CD8-positive, alpha-beta T cell (primary cell): ENCODE measurements at regions of chr9 and their contacts with region 1.

Region 1: GRCh38 chr9:129413537-129414376 is 207.1 kb downstream of the C9orf50 start:
- DNase-seq: peak; percentile 97 to 100 (median 99)
- ATAC-seq: peak; percentile 76
- H3K4me3 ChIP-seq: peak overlapping the region; percentile 56 to 87
- H3K4me3 Mint-ChIP-seq: peak overlapping the region; percentile 87
- H3K27ac ChIP-seq: peak overlapping the region; percentile 99
- H3K27ac Mint-ChIP-seq: peak overlapping the region; percentile 99
- H3K4me1 ChIP-seq: peaks cover 27% of the 10 kb centered on the region
- H3K4me1 Mint-ChIP-seq: peaks cover 33% of the 10 kb centered on the region
- H3K27me3 ChIP-seq: no peaks in the 10 kb centered on the region
- H3K27me3 Mint-ChIP-seq: no peaks in the 10 kb centered on the region
- CTCF ChIP-seq: no peak

Region 2: DNA sequence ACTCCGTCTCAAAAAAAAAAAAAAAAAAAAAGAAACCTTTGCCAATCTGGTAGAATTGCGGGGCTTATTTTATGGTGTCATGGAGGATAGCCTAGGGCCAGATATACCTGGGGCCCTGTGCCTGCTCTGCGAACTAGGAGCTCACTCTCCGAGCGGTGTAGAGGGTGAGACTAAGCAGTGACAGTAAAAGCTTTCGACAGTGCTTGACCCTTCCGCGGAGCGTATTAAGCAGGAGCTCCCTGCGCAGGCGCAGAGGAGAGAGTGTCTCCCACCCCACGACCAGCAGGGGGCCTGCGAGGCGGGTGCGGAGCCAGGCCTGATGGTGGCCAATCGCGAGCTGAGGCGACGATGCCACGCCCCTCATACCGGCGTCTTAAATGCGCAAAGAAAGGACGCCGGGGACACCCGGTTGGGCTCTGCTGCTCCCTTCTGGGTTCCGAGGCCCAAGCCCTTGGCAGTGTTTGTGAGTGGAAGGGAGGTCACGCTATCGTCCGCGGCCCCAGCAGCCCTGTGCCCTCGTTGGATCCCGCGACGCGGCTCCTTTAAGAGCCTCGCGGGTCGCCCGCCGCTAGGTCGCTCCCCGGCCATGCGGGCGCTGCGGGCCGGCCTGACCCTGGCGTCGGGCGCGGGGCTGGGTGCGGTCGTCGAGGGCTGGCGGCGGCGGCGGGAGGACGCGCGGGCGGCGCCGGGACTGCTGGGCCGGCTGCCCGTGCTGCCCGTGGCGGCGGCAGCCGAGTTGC is 595.5 kb before region 1 on chr9 and contains the start of gene ENDOG:
- CTCF ChIA-PET with region 1: no interaction called
- POLR2A ChIA-PET with region 1: no interaction called
- intact Hi-C with region 1: no loop called
- DNase-seq: peak; percentile 94 to 98 (median 97)
- ATAC-seq: peak; percentile 96
- H3K4me3 ChIP-seq: peak within 1 kb of the TSS; percentile 59 to 75
- H3K4me3 Mint-ChIP-seq: peak within 1 kb of the TSS; percentile 91
- H3K27ac ChIP-seq: peak within 1 kb of the TSS; percentile 52 to 67
- H3K27ac Mint-ChIP-seq: peak within 1 kb of the TSS; percentile 87
- H3K4me1 ChIP-seq: peaks cover 12% of the 10 kb centered on the region
- H3K4me1 Mint-ChIP-seq: peaks cover 21% of the 10 kb centered on the region
- H3K27me3 ChIP-seq: no peaks in the 10 kb centered on the region
- H3K27me3 Mint-ChIP-seq: no peaks in the 10 kb centered on the region
- CTCF ChIP-seq: peak; percentile 98
- total RNA-seq, gene ENDOG: 6.2 to 6.4 TPM

Region 3: GRCh38 chr9:129237195-129237611 is 176.6 kb before region 1 on chr9:
- CTCF ChIA-PET with region 1: no interaction called
- POLR2A ChIA-PET with region 1: no interaction called
- intact Hi-C with region 1: loop called (anchors 5 to 10 kb)
- DNase-seq: peak in 8 of 9 experiments; percentile 36 to 79 (median 66)
- ATAC-seq: peak; percentile 70
- H3K4me3 ChIP-seq: peak overlapping the region; percentile 51 to 66
- H3K4me3 Mint-ChIP-seq: peak overlapping the region; percentile 88
- H3K27ac ChIP-seq: peak overlapping the region; percentile 56 to 62
- H3K27ac Mint-ChIP-seq: peak overlapping the region; percentile 94
- H3K4me1 ChIP-seq: peaks cover 50% of the 10 kb centered on the region
- H3K4me1 Mint-ChIP-seq: peaks cover 70% of the 10 kb centered on the region
- H3K27me3 ChIP-seq: no peaks in the 10 kb centered on the region
- H3K27me3 Mint-ChIP-seq: no peaks in the 10 kb centered on the region
- CTCF ChIP-seq: no peak

Region 4: DNA sequence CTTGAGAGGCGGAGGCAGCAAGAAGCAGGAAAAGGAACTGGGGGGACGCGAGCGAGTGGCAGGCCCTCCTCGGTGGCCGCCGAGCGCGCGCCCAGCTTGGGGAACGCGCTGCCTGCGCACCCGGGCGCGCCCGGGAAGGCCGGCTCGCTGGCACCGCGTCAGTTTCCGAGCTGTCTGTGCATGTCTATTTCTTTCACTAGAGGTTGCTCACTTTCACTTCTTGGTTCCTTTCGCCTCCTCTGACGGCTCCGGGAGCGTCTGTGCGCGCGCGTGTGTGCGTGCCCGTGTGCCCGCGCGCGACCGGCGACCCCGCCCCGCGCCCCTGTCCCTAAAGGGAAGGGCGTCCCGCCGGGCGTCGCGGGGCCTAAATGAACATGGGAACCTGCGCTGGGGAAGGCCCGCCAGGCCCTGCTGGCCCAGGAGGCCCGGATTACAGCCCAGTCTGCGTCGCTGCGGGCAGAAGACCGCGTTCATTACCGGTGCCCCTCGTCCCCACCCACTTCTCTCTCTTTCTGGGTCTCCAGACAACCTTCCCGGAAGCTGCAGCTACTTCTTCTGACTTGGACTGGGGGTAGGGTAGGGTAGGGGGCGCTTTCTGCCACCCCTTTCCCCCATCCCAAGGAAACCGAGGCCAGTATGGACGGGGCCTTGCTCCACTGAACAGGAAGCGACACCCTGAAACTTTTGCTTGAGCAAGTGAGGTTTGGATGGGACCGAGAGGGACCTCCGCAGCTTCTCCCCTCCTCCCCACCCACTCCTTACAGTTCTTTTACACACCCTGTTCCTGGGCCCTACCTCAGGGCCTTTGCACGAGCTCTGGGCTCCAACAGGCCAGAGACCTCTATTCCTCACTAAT is 30.0 kb before region 1 on chr9:
- CTCF ChIA-PET with region 1: no interaction called
- POLR2A ChIA-PET with region 1: interaction called, 9 read pairs
- intact Hi-C with region 1: loop called (anchors 1 kb)
- DNase-seq: peak; percentile 46 to 90 (median 77)
- ATAC-seq: peak; percentile 90
- H3K4me3 ChIP-seq: peak overlapping the region; percentile 46 to 64
- H3K4me3 Mint-ChIP-seq: peak overlapping the region; percentile 84
- H3K27ac ChIP-seq: peak overlapping the region; percentile 77 to 90
- H3K27ac Mint-ChIP-seq: peak overlapping the region; percentile 94
- H3K4me1 ChIP-seq: peaks cover 18% of the 10 kb centered on the region
- H3K4me1 Mint-ChIP-seq: peaks cover 15% of the 10 kb centered on the region
- H3K27me3 ChIP-seq: no peaks in the 10 kb centered on the region
- H3K27me3 Mint-ChIP-seq: no peaks in the 10 kb centered on the region
- CTCF ChIP-seq: peak; percentile 27

Region 5: GRCh38 chr9:129487642-129488409 is 74.1 kb after region 1 on chr9:
- CTCF ChIA-PET with region 1: no interaction called
- POLR2A ChIA-PET with region 1: no interaction called
- intact Hi-C with region 1: loop called (anchors 1 kb)
- DNase-seq: peak in 3 of 9 experiments; percentile 64 to 80 (median 64)
- ATAC-seq: peak; percentile 14
- H3K4me3 ChIP-seq: peak overlapping the region; percentile 55 to 58
- H3K4me3 Mint-ChIP-seq: peak overlapping the region; percentile 80
- H3K27ac ChIP-seq: peak overlapping the region; percentile 72 to 83
- H3K27ac Mint-ChIP-seq: peak overlapping the region; percentile 92
- H3K4me1 ChIP-seq: peaks cover 56% of the 10 kb centered on the region
- H3K4me1 Mint-ChIP-seq: peaks cover 42% of the 10 kb centered on the region
- H3K27me3 ChIP-seq: no peaks in the 10 kb centered on the region
- H3K27me3 Mint-ChIP-seq: no peaks in the 10 kb centered on the region
- CTCF ChIP-seq: no peak